A549 (cell line): ENCODE measurements at regions of chr20 and their contacts with region 1.

Region 1: DNA sequence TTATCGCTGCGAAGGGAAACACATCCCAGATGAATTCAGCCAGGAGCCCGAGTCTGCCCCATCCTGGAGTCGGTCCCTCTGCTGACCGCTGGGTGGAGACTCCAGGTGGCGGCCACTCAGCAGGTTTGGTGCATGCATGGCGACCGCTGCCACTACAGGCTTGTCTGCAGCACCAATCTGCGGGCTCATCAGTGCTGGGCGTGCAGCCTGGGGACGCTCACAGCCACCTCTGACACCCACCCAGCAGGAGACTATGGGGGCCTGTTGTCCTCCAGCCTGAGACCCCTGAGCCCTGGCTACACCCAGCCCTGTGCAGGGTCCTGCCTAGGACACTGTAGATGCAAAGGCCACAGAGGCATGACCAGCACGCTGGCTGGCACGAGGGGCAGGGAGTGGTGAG is 40.5 kb upstream of the GATA5 start:
- DNase-seq: peak; percentile 64 to 76
- ATAC-seq: peak; percentile 86 to 93
- H3K4me3 ChIP-seq: no peak overlapping the region
- H3K27ac ChIP-seq: no peak overlapping the region
- H3K4me1 ChIP-seq: no peaks in the 10 kb centered on the region
- CTCF ChIP-seq: peak; percentile 55
- EP300 ChIP-seq: no peak
- POLR2A ChIP-seq: no peak
- RAD21 ChIP-seq: peak; percentile 55 to 60

Region 2: DNA sequence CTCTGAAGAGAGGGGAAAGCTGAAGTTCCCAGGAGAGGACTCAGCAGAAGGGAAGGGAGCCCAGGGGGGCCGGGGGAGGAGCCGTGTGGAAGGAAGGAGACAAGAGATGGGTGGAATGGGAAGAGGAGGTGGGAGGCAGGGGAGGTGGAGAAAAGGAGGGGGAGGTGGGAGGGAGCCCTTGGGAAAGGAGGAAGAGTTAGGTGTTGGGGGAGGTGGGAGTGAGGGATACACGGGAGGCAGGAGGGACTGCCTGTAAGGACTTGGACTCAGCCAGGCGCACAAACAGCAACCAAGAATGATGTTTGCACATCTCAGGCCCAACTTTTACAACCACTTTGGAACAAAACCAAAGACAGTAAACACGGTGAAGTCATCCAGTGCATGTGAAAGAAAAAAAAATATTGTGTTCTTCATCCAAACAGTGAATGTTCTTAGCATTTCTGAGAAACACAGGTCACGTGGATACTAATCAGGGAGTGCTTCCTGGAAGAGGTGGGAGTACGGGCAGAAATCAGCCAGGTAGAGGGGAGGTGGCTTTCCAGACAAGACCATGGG is 411.5 kb before region 1 on chr20:
- CTCF ChIA-PET with region 1: no interaction called
- POLR2A ChIA-PET with region 1: no interaction called
- DNase-seq: no peak
- ATAC-seq: no peak
- H3K4me3 ChIP-seq: no peak overlapping the region
- H3K27ac ChIP-seq: no peak overlapping the region
- H3K4me1 ChIP-seq: no peaks in the 10 kb centered on the region
- CTCF ChIP-seq: no peak
- EP300 ChIP-seq: no peak
- POLR2A ChIP-seq: no peak
- RAD21 ChIP-seq: no peak

Region 3: GRCh38 chr20:62587757-62588402 is 71.5 kb after region 1 on chr20:
- CTCF ChIA-PET with region 1: interaction called, 10 read pairs
- POLR2A ChIA-PET with region 1: no interaction called
- DNase-seq: no peak
- ATAC-seq: no peak
- H3K4me3 ChIP-seq: no peak overlapping the region
- H3K27ac ChIP-seq: no peak overlapping the region
- H3K4me1 ChIP-seq: peaks cover 9% of the 10 kb centered on the region; the same call in 2 of the 3 replicates
- CTCF ChIP-seq: no peak
- EP300 ChIP-seq: no peak
- POLR2A ChIP-seq: no peak
- RAD21 ChIP-seq: no peak

Region 4: GRCh38 chr20:62675156-62675876 is 159.0 kb after region 1 on chr20:
- CTCF ChIA-PET with region 1: no interaction called
- POLR2A ChIA-PET with region 1: no interaction called
- DNase-seq: no peak
- ATAC-seq: no peak; a peak in 1 of 6 replicates
- H3K4me3 ChIP-seq: no peak overlapping the region
- H3K27ac ChIP-seq: no peak overlapping the region
- H3K4me1 ChIP-seq: no peaks in the 10 kb centered on the region
- CTCF ChIP-seq: no peak
- EP300 ChIP-seq: no peak
- POLR2A ChIP-seq: no peak
- RAD21 ChIP-seq: no peak